Right ventricle myocardium inferior (tissue), 1 donor: ENCODE measurements at regions of chr10 and their contacts with region 1.

Region 1: GRCh38 chr10:89148061-89148460 is 59.1 kb downstream of the CH25H start:
- DNase-seq: no peak
- ATAC-seq: no peak

Region 2: DNA sequence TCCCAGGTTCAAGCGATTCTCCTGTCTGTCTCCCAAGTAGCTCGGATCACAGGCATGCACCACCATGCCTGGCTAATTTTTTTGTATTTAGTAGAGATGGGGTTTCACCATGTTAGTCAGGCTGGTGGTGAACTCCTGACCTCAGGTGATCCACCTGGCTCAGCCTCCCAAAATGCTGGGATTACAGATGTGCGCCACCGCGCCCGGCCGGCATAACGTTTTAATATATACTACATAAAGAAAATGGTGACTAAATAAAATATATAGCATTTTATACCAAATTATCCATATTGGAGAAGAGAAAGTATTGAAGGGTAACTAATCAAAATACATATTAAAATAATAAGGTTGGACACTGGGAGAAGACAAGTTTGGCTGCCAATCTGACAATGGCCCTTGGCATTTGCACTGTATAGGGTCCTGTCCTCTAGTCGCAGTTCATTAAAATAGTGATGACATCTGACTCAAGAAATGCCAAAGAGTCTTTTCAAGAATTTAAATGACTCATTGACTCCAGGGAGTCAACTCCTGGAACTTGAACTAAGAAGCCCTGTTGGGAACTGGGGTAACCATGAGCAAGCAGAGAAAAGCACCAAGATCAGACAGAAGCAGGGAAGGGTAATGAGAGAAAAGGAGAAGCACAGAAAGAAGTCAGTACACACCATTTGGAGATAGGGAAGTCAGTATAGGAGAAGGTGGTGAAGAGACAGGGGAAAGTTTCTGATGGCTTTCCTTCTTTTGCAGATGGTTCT is 32.0 kb before region 1 on chr10:
- intact Hi-C with region 1: no loop called
- DNase-seq: no peak
- ATAC-seq: no peak

Region 3: GRCh38 chr10:89175816-89176215 is 27.8 kb after region 1 on chr10:
- intact Hi-C with region 1: loop called (anchors 1 kb)
- DNase-seq: no peak
- ATAC-seq: no peak

Region 4: GRCh38 chr10:89314676-89315075 is 166.6 kb after region 1 on chr10:
- intact Hi-C with region 1: no loop called
- DNase-seq: no peak
- ATAC-seq: no peak